Panc1 (cell line): ENCODE measurements at regions of chr1 and their contacts with region 1.

Region 1: DNA sequence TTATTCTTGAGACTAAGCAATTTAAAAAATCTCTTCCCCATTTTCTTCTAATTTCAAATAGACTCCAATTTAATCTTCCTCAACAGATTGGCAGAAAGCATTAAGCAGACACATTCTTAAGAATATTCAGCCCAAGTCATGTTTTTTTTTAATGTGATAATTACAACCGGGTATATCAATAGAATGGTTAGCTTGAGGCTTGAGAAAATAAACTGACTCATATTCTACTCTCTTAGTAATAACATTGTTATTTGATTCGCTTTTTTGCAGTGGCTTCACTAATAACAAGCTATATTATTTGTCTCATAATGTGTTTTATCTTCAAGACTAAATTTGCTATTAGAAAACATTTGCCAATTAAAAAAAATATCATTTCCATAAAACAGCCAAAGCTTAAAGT is 488.6 kb upstream of the RGS18 start:
- DNase-seq: no peak
- ATAC-seq: no peak
- H3K4me3 ChIP-seq: no peak overlapping the region
- H3K27ac ChIP-seq: no peak overlapping the region
- H3K4me1 ChIP-seq: no peaks in the 10 kb centered on the region
- H3K27me3 ChIP-seq: no peaks in the 10 kb centered on the region
- CTCF ChIP-seq: no peak

Region 2: GRCh38 chr1:191483988-191484387 is 185.6 kb before region 1 on chr1:
- CTCF ChIA-PET with region 1: no interaction called
- POLR2A ChIA-PET with region 1: no interaction called
- in situ Hi-C with region 1: no loop called
- intact Hi-C with region 1: loop called (anchors 5 kb)
- DNase-seq: no peak
- ATAC-seq: no peak
- H3K4me3 ChIP-seq: no peak overlapping the region
- H3K27ac ChIP-seq: no peak overlapping the region
- H3K4me1 ChIP-seq: no peaks in the 10 kb centered on the region
- H3K27me3 ChIP-seq: no peaks in the 10 kb centered on the region
- CTCF ChIP-seq: no peak